Sigmoid colon (tissue), 7 donors: ENCODE measurements at regions of chr9 and their contacts with region 1.

Region 1: GRCh38 chr9:79571309-79572031 is at the start of gene TLE4:
- DNase-seq: peak; percentile 100
- H3K4me3 ChIP-seq: peak within 1 kb of the TSS; percentile 89 to 94 (median 94)
- H3K27ac ChIP-seq: peak within 1 kb of the TSS; percentile 93 to 97 (median 94)
- H3K4me1 ChIP-seq: peaks cover 0 to 34% (median 19%) of the 10 kb centered on the region in 4 donors
- H3K27me3 ChIP-seq: no peaks in the 10 kb centered on the region
- CTCF ChIP-seq: no peak
- EP300 ChIP-seq: peak in 1 of 4 donors; percentile 7
- POLR2A ChIP-seq: peak; percentile 88 to 90
- total RNA-seq, gene TLE4: 29.1 to 60.9 (median 34.6) TPM

Region 2: GRCh38 chr9:79524266-79524665 is 47.2 kb before region 1 on chr9:
- intact Hi-C with region 1: no loop called
- DNase-seq: no peak
- H3K4me3 ChIP-seq: no peak overlapping the region
- H3K27ac ChIP-seq: no peak overlapping the region
- H3K4me1 ChIP-seq: no peaks in the 10 kb centered on the region
- H3K27me3 ChIP-seq: no peaks in the 10 kb centered on the region
- CTCF ChIP-seq: no peak
- EP300 ChIP-seq: no peak
- POLR2A ChIP-seq: no peak

Region 3: DNA sequence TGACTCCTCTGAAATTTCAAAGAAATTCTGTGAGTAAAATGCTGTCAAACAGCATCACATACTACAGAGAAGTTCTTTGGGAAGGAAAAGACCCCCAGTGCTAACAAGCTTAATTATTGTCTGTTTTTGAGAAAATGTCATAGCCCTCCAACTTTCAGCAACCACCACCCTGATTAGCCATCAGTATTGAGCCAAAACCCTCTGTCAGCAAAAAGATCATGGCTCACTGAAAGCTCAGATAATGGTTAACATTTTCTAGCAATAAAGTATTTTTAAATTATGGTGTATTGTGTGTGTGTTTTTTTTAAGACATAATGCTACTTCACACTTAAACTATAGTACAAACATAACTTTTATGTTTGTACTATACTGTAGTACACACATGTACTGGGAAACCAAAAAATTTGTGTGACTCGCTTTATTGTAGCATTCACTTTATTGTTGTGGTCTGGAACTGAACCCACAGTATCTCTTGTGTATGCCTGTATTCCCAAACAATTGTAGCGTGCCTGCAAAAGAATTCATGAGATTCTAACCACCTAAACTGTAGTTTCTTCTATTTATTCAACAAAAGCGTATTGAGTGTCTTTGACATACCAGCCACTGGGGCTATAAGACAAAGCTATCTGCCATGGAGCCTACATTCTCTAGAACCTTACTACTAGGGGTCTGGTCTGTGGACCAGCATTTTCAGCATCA is 31.9 kb after region 1 on chr9:
- intact Hi-C with region 1: no loop called
- DNase-seq: no peak
- H3K4me3 ChIP-seq: no peak overlapping the region
- H3K27ac ChIP-seq: no peak overlapping the region
- H3K4me1 ChIP-seq: peaks cover 0 to 18% (median 7%) of the 10 kb centered on the region in 4 donors
- H3K27me3 ChIP-seq: no peaks in the 10 kb centered on the region
- CTCF ChIP-seq: no peak
- EP300 ChIP-seq: no peak
- POLR2A ChIP-seq: no peak

Region 4: DNA sequence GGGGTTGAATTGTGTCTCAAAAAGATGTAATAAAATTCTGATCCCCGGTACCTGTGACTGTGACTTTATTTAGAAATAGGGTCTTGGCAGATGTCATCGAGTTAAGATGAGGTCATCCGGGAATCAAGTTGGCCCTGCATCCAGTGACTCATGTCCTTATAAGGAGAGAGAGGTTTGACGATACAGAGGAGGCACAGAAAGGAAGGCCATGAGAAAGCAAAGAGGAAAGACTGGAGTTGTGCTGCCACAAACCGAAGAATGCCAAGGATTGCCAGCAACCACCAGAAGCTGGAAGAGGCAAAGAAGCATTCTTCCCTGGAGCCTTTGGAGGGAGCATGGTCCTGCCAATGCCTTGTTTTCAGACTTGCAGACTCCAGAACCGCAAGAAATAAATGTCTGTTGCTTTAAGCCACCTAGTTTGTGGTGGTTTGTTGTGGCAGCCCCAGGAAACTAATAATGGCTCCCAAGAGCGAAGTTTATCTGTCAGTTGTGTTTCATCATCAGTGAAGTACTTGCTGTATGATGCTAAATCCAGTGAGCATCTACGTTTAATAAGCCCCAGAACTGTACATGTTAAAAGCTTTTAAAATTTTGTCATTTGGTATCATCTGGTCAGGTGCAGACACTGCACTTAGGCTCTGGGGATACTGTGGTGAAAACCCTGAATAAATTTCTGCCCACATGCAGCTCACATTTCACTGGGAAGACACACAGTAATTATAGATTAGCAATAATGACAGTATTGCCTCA is 115.1 kb after region 1 on chr9:
- intact Hi-C with region 1: loop called (anchors 5 kb)
- DNase-seq: no peak
- H3K4me3 ChIP-seq: no peak overlapping the region
- H3K27ac ChIP-seq: peak overlapping the region in 2 of 4 donors; percentile 43 to 68
- H3K4me1 ChIP-seq: peaks cover 0 to 39% (median 23%) of the 10 kb centered on the region in 4 donors
- H3K27me3 ChIP-seq: no peaks in the 10 kb centered on the region
- CTCF ChIP-seq: no peak
- EP300 ChIP-seq: no peak
- POLR2A ChIP-seq: no peak

Region 5: DNA sequence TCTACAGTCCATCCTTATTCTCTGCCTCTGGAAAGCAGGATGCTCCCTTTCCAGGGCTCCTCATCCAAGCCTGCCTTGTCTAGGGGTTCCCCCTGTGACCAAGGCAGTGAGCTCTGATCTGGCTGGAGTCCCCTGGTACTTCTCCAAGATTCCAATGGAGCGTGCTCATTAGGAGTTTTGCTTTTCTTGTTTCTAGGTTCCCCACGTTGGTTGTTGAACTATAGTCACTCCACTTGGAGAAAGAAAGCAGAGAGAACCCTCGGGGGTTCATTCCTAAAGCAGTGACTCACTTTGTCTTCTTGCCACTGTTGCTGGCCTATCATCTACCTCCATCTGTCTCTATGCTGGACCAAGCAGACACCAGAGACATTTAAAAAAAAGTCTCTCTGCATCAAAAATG is 192.9 kb after region 1 on chr9:
- intact Hi-C with region 1: loop called (anchors 10 kb)
- DNase-seq: peak; percentile 76
- H3K4me3 ChIP-seq: no peak overlapping the region
- H3K27ac ChIP-seq: peak overlapping the region; percentile 30 to 56 (median 34)
- H3K4me1 ChIP-seq: peaks cover 0 to 20% (median 13%) of the 10 kb centered on the region in 4 donors
- H3K27me3 ChIP-seq: no peaks in the 10 kb centered on the region
- CTCF ChIP-seq: no peak
- EP300 ChIP-seq: no peak
- POLR2A ChIP-seq: no peak